ENCODE measurements at regions of chr12 and their contacts with region 1.

Region 1: GRCh38 chr12:109134186-109134917 is 18.0 kb downstream of the ACACB start:
- DNase-seq: peak; percentile 70
- H3K4me3 Mint-ChIP-seq: no peak overlapping the region
- H3K27ac Mint-ChIP-seq: peak overlapping the region; percentile 49
- H3K4me1 Mint-ChIP-seq: peaks cover 11% of the 10 kb centered on the region
- H3K27me3 Mint-ChIP-seq: peaks cover 13% of the 10 kb centered on the region
- CTCF ChIP-seq: peak; percentile 45

Region 2: DNA sequence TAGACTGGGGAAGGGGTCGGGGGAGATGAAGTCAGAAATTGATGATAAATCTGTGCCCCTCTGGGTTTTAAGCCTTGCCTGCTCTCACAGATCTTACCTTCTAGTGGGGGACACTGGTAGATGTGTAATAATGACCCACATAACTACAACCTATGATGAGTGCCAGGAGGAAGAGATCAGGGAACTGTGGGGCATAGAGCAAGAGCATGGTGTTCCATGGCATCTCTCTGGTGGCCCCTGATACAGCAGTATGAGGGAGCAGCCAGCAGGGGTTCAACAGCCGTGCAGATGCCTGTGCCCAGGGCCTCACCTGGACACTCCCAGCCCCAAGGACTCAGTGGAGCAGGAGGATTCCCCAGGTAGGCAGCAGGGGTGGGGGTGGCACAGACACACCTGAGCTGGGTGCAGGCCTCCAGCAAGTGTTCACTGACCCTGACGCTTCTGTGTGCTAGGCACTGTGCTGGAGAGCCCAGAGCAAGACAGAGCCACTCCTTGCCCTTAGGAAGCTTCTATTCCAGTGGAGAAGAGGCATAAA is 12.9 kb before region 1 on chr12:
- CTCF ChIA-PET with region 1: no interaction called
- POLR2A ChIA-PET with region 1: no interaction called
- intact Hi-C with region 1: no loop called
- DNase-seq: no peak
- H3K4me3 Mint-ChIP-seq: no peak overlapping the region
- H3K27ac Mint-ChIP-seq: no peak overlapping the region
- H3K4me1 Mint-ChIP-seq: no peaks in the 10 kb centered on the region
- H3K27me3 Mint-ChIP-seq: no peaks in the 10 kb centered on the region
- CTCF ChIP-seq: no peak

Region 3: DNA sequence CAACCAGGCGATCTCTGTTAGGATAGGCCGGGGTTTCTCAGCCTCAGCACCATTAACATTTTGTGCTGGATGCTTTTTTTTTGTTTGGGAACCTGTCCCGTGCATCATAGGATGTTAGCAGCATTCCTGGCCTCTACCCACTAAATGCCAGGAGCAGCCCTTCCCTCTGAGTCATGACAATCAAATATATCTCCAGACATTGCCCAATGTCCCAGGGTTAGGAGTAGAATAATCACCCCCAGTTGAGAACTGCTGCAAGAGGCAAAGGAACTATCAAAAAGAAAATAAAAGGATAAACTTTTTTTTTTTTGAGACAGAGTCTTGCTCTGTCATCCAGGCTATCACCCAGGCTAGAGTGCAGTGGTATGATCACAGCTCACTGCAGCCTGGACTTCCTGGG is 58.0 kb after region 1 on chr12:
- CTCF ChIA-PET with region 1: no interaction called
- POLR2A ChIA-PET with region 1: no interaction called
- intact Hi-C with region 1: loop called (anchors 10 kb)
- DNase-seq: peak; percentile 94
- H3K4me3 Mint-ChIP-seq: no peak overlapping the region
- H3K27ac Mint-ChIP-seq: peak overlapping the region; percentile 77
- H3K4me1 Mint-ChIP-seq: no peaks in the 10 kb centered on the region
- H3K27me3 Mint-ChIP-seq: no peaks in the 10 kb centered on the region
- CTCF ChIP-seq: no peak

Region 4: GRCh38 chr12:109309381-109310246 is 175.3 kb after region 1 on chr12:
- CTCF ChIA-PET with region 1: no interaction called
- POLR2A ChIA-PET with region 1: no interaction called
- intact Hi-C with region 1: no loop called
- DNase-seq: peak; percentile 18
- H3K4me3 Mint-ChIP-seq: peak overlapping the region; percentile 73
- H3K27ac Mint-ChIP-seq: no peak overlapping the region
- H3K4me1 Mint-ChIP-seq: no peaks in the 10 kb centered on the region
- H3K27me3 Mint-ChIP-seq: peaks cover 57% of the 10 kb centered on the region
- CTCF ChIP-seq: no peak

Region 5: GRCh38 chr12:109385339-109386067 is 251.2 kb after region 1 on chr12:
- CTCF ChIA-PET with region 1: interaction called, 3 read pairs
- POLR2A ChIA-PET with region 1: no interaction called
- intact Hi-C with region 1: loop called (anchors 5 kb)
- DNase-seq: peak; percentile 52
- H3K4me3 Mint-ChIP-seq: peak overlapping the region; percentile 41
- H3K27ac Mint-ChIP-seq: peak overlapping the region; percentile 86
- H3K4me1 Mint-ChIP-seq: peaks cover 11% of the 10 kb centered on the region
- H3K27me3 Mint-ChIP-seq: peaks cover 23% of the 10 kb centered on the region
- CTCF ChIP-seq: peak; percentile 67

Measured in MCF 10A (cell line).